Cardiac septum (tissue), 1 donor: ENCODE measurements at regions of chr11 and their contacts with region 1.

Region 1: DNA sequence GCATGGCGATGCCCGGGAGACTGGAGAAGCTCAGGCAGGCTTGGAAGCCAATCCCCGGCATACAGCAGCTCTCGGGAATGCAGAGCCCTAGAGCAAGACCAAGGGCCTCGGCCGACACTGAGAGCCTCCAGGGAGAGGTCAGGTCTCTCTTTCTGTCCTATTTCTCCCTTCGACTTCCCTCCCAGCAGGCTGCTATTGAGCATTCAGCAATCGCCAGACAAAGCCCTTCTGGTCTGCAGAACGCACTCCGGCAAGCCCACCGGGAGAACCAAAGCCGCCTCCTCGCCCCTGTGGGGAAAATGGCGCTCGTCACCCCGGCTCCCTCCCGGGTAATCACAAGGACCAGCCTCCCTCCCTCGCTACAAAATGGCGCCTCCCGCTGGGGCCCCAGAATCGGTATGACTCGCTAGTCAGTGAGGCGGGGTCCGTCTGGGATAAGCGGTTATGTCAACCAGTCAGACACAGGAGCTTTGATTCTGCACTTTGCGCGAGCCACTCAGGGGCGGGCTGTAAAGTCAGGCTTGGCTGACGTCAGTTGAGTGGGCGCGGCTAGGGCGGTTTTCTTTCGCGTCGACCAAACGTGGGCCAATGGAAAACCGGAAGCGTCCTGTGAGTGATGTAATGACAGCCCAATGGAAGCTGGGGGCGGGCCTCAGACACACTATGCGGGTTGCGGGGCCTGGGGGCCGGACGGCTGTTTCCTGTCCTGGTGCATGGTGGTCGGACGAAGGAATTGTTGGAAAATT is at the start of gene ZNF143:
- DNase-seq: peak; percentile 100
- total RNA-seq, gene ZNF143: 22.6 TPM

Region 2: GRCh38 chr11:9314291-9315036 is 146.0 kb before region 1 on chr11 and contains the start of gene TMEM41B:
- intact Hi-C with region 1: loop called (anchors 2 kb)
- DNase-seq: peak; percentile 98
- total RNA-seq, gene TMEM41B: 18.2 TPM

Region 3: DNA sequence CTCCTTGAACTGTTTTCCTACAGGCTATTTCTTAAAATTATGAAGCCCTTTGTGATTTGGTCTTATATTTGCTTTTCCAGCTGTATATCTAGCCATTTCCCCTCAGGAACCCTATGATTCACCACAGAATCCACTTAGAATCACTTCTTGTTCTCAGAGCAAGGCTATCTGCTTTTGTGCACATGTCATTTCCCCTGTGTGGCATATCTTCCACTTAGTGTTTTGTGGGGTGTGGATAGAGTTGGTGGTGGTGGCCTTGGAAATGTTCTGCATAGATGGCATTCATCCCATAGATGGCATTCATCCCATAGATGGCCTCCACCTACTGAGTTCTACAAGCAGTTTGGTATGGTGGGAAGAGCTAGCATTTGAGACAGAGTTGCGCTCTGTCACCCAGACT is 248.0 kb after region 1 on chr11:
- intact Hi-C with region 1: no loop called
- DNase-seq: no peak